RWPE1 (cell line): ENCODE measurements at regions of chr19 and their contacts with region 1.

Region 1: GRCh38 chr19:5987077-5987818 is 9.3 kb upstream of the RANBP3 start:
- DNase-seq: peak; percentile 81
- H3K27ac ChIP-seq: 0 out of 2 replicates have a peak overlapping the region, but pooled peaks have one; percentile 30
- CTCF ChIP-seq: peak; percentile 92

Region 2: DNA sequence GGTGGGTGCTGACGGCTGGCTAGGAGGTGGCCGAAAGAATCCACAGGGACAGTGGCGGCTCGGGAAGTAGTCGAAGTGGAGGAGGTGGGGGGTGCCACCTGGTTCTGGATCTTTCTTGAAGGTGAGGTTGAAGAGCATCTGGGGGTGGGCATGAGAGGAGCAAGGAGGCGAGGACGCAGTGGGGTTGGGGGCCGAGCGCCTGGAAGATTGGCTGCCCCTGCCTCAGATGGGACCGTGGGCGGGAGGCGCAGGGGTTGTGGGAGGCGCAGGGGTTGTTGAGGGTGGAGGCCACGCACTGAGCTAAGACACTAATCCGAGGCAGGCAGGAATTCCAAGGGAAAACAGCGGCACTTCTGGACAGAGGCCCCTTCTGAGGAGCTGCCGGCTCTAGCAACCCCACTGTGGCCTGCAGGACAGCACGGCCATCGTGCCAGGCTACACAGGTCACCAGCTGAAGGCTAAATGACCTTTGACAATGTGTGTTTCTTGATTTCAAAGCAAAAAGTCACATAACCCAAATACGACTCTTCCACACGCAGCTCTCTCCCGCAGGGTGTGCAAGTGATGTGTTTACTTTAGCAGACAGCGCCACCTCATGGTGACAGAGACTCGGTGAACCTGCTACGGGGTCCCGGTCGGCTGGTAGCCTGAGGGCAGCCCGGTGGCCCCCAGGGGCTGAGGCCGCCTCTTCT is 34.8 kb after region 1 on chr19:
- CTCF ChIA-PET with region 1: interaction called, 12 read pairs
- POLR2A ChIA-PET with region 1: no interaction called
- DNase-seq: peak; percentile 40
- H3K27ac ChIP-seq: peak overlapping the region; percentile 37; the same call in 1 of the 2 replicates
- CTCF ChIP-seq: peak; percentile 39